ENCODE measurements at regions of chr7 and their contacts with region 1.

Region 1: DNA sequence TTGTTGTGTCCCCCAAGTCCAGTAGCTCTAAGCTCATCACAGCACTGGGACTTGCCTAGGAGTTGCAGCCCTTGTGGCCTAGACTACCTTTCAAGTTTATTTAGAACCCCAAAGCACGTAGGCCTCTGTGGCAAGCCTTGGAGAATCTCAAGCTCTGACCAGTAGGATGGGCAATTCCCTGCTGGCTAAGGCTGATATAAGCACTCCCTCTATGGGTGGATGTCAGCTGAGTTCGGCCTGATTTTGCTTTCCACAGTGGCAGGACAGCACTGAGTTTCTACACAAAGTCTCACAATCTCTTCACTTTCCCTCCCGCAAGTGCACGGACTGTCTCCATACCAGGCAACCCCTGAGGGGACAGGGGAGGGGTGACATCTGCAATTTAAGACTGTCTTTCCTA is 886.4 kb upstream of the LRRN3 start:
- DNase-seq: peak; percentile 42 to 51
- H3K4me3 ChIP-seq: no peak overlapping the region
- H3K4me3 Mint-ChIP-seq: no peak overlapping the region
- H3K27ac Mint-ChIP-seq: no peak overlapping the region
- H3K4me1 ChIP-seq: no peaks in the 10 kb centered on the region
- H3K4me1 Mint-ChIP-seq: no peaks in the 10 kb centered on the region
- H3K27me3 ChIP-seq: no peaks in the 10 kb centered on the region
- H3K27me3 Mint-ChIP-seq: peaks cover 13% of the 10 kb centered on the region
- CTCF ChIP-seq: peak in 1 of 2 experiments; percentile 56

Region 2: DNA sequence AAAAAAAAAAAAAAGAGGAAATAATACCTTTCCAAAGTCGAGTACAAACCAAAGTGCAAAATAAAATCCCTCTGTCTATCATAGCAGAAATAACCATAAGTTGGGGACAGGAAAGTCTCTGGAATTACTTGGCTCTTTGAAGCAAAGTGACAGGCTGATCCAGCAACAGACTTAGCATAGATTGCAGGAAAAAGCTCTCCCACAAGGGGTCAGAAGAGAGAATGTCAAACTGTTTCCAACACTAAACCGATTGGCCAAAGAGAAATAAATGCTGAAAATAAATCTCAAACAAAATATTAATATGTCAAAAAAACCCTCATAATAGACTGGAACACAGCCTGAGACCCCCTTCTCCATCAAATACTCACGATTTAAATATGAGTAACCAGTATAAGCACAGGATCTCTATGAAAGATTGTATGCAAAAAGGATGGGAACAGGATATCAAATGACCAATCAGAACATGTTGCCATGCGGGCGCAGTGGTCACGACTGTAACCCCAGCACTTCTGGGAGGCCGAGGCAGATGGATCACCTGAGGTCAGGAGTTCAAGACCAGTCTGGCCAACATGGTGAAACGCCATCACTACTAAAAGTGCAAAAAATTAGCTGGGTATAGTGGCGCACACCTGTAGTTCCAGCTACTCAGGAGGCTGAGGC is 114.3 kb before region 1 on chr7:
- CTCF ChIA-PET with region 1: no interaction called
- POLR2A ChIA-PET with region 1: no interaction called
- intact Hi-C with region 1: loop called (anchors 1 kb)
- DNase-seq: peak in 1 of 2 experiments; percentile 52
- H3K4me3 ChIP-seq: no peak overlapping the region
- H3K4me3 Mint-ChIP-seq: no peak overlapping the region
- H3K27ac Mint-ChIP-seq: no peak overlapping the region
- H3K4me1 ChIP-seq: no peaks in the 10 kb centered on the region
- H3K4me1 Mint-ChIP-seq: no peaks in the 10 kb centered on the region
- H3K27me3 ChIP-seq: no peaks in the 10 kb centered on the region
- H3K27me3 Mint-ChIP-seq: peaks cover 2% of the 10 kb centered on the region
- CTCF ChIP-seq: peak; percentile 65 to 66

Region 3: GRCh38 chr7:110186331-110186730 is 18.2 kb before region 1 on chr7:
- CTCF ChIA-PET with region 1: no interaction called
- POLR2A ChIA-PET with region 1: no interaction called
- intact Hi-C with region 1: loop called (anchors 1 kb)
- DNase-seq: peak in 1 of 2 experiments; percentile 57
- H3K4me3 ChIP-seq: no peak overlapping the region
- H3K4me3 Mint-ChIP-seq: no peak overlapping the region
- H3K27ac Mint-ChIP-seq: no peak overlapping the region
- H3K4me1 ChIP-seq: peaks cover 10% of the 10 kb centered on the region
- H3K4me1 Mint-ChIP-seq: no peaks in the 10 kb centered on the region
- H3K27me3 ChIP-seq: no peaks in the 10 kb centered on the region
- H3K27me3 Mint-ChIP-seq: no peaks in the 10 kb centered on the region
- CTCF ChIP-seq: no peak

Region 4: DNA sequence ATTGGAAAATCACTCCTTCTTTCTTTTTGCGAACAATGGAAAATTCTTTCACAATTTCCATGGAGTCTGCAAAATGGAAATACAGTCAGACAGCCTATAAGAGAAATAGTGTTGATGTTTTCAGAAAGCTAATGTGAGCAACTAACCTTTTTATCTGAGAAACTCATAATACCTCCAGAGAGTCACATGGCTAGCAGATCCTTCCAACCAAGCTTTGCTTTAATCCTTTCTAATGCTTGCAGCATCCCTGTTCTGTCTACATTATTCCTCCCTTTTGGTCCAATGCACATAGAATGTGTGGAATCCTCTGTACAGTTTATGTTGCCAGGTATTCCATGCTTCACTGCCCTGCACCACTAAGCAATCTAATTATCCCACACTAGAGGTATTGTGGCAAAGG is 168.9 kb after region 1 on chr7:
- CTCF ChIA-PET with region 1: no interaction called
- POLR2A ChIA-PET with region 1: no interaction called
- intact Hi-C with region 1: loop called (anchors 10 kb)
- DNase-seq: no peak
- H3K4me3 ChIP-seq: no peak overlapping the region
- H3K4me3 Mint-ChIP-seq: no peak overlapping the region
- H3K27ac Mint-ChIP-seq: peak overlapping the region; percentile 70
- H3K4me1 ChIP-seq: peaks cover 17% of the 10 kb centered on the region
- H3K4me1 Mint-ChIP-seq: peaks cover 18% of the 10 kb centered on the region
- H3K27me3 ChIP-seq: no peaks in the 10 kb centered on the region
- H3K27me3 Mint-ChIP-seq: no peaks in the 10 kb centered on the region
- CTCF ChIP-seq: no peak

Measured in Caco-2 (cell line).